ENCODE measurements at regions of chr22 and their contacts with region 1.

Region 1: GRCh38 chr22:22848364-22848866 is 39.2 kb upstream of the IGLL5 start:
- DNase-seq: peak; percentile 78
- H3K4me3 Mint-ChIP-seq: no peak overlapping the region
- H3K27ac Mint-ChIP-seq: no peak overlapping the region
- H3K4me1 Mint-ChIP-seq: peaks cover 28% of the 10 kb centered on the region
- H3K27me3 Mint-ChIP-seq: no peaks in the 10 kb centered on the region

Region 2: GRCh38 chr22:22770280-22770871 is 78.0 kb before region 1 on chr22:
- CTCF ChIA-PET with region 1: interaction called, 11 read pairs
- POLR2A ChIA-PET with region 1: no interaction called
- intact Hi-C with region 1: no loop called
- DNase-seq: peak; percentile 65
- H3K4me3 Mint-ChIP-seq: no peak overlapping the region
- H3K27ac Mint-ChIP-seq: no peak overlapping the region
- H3K4me1 Mint-ChIP-seq: peaks cover 9% of the 10 kb centered on the region
- H3K27me3 Mint-ChIP-seq: peaks cover 5% of the 10 kb centered on the region

Region 3: DNA sequence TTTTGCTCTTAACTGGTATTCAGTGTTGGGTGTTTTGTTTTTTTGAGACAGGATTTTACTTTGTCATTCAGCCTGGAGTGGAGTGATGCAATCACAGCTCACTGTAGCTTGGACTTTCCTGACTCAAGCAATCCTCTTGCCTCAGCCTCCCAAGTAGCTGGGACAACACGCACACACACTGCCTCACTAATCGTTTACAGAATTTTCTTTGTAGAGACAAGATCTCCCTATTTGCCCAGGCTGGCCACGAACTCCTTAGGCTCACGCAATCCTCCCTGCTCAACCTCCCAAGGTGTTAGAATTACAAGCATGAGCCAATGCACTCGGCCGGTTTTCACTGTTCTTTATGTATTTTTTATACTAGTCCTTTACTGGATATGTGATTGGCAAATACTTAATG is 11.8 kb before region 1 on chr22:
- CTCF ChIA-PET with region 1: interaction called, 21 read pairs
- POLR2A ChIA-PET with region 1: no interaction called
- intact Hi-C with region 1: no loop called
- DNase-seq: no peak
- H3K4me3 Mint-ChIP-seq: no peak overlapping the region
- H3K27ac Mint-ChIP-seq: no peak overlapping the region
- H3K4me1 Mint-ChIP-seq: peaks cover 16% of the 10 kb centered on the region
- H3K27me3 Mint-ChIP-seq: no peaks in the 10 kb centered on the region

Region 4: DNA sequence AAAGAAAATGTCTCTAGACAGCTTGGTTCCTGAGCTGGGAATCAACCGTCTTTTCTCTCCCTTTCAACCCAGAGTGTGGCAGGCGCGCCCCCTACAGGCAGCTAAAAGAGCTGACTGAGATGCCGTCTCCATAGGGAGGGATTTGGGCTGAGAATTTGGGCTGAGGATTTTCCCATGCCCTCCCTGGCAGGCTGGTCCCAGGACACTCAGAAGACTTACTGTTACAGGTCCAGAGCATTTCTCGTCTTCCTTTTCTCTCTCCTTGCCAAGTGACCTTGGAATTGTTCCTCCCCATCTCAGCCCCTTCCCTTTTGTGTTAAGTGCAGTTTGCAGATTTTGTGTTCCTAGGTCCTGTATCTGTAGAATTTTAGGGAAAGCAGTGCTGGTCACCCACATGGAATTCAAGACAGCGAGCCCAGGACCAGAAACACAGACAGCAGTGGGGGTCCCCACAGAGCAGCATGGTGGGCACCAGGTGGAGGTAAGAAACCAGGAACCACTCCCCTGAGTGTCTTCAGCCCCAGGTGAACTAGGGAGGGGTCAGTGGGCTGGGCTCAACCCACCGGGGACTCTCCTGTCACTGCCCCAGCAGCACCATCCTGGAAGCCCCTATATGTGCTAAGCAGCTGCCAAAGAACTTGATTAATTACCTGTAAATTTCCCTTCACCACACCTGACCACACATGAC is 29.3 kb after region 1 on chr22:
- CTCF ChIA-PET with region 1: interaction called, 286 read pairs
- POLR2A ChIA-PET with region 1: no interaction called
- intact Hi-C with region 1: loop called (anchors 1 kb)
- DNase-seq: peak; percentile 82
- H3K4me3 Mint-ChIP-seq: no peak overlapping the region
- H3K27ac Mint-ChIP-seq: no peak overlapping the region
- H3K4me1 Mint-ChIP-seq: no peaks in the 10 kb centered on the region
- H3K27me3 Mint-ChIP-seq: no peaks in the 10 kb centered on the region

Region 5: DNA sequence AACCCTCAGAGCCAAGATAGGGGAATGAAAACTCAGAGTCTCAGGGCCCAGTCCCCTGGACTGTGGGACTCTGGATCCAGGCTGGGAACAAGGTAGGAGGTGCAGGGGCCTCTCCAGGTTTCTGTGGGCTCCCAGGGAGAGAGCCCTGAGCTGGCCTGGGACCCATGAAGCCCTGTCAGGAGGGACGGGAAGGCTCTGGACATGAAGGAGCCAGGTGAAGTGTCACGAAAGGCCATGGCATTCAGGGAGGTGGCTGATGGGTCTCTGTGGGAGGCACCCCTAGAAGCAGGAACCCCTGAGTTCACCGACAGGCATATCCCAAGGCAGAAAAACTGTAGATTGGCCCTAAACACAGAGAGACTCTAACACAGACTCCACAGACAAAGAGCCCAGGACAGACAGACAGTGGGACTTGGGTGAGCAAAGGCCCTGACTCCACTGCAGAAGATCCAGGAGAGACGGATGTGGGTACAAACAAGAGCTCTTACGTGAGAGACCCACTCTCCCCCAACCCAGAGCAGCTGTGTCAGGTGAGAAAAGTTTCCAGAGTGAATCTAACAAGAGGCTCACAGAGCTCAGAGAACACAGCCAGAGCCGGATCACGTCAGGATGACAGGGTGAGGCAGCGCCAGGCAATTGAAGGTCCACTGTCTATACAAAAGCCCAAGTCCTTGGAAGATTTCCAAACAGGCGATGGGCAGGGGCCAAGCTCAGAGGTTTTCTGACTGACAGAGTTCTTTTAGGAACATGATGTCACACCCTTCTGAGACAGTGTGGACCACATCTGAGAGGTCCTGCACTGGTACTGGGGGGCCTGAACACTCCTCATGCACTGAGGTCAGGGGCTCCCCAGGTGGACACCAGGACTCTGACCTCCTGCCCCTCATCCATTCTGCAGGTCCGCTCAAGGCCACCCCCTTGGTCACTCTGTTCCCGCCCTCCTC is 66.6 kb after region 1 on chr22:
- CTCF ChIA-PET with region 1: no interaction called
- POLR2A ChIA-PET with region 1: no interaction called
- intact Hi-C with region 1: no loop called
- DNase-seq: no peak
- H3K4me3 Mint-ChIP-seq: no peak overlapping the region
- H3K27ac Mint-ChIP-seq: no peak overlapping the region
- H3K4me1 Mint-ChIP-seq: no peaks in the 10 kb centered on the region
- H3K27me3 Mint-ChIP-seq: peaks cover 4% of the 10 kb centered on the region

Region 6: GRCh38 chr22:22942511-22943329 is 94.3 kb after region 1 on chr22:
- CTCF ChIA-PET with region 1: interaction called, 14 read pairs
- POLR2A ChIA-PET with region 1: no interaction called
- intact Hi-C with region 1: loop called (anchors 1 kb)
- DNase-seq: peak; percentile 83
- H3K4me3 Mint-ChIP-seq: no peak overlapping the region
- H3K27ac Mint-ChIP-seq: no peak overlapping the region
- H3K4me1 Mint-ChIP-seq: peaks cover 5% of the 10 kb centered on the region
- H3K27me3 Mint-ChIP-seq: peaks cover 4% of the 10 kb centered on the region

Measured in activated CD4-positive, alpha-beta memory T cell treated with anti-CD3 and anti-CD28 coated beads for 36 hours (primary cell).